Activated CD4-positive, alpha-beta T cell treated with anti-CD3 and anti-CD28 coated beads, Interleukin-2, amount 10 ng/mL, durations not matched to agents 24 days and 14 days (primary cell): ENCODE measurements at regions of chr13 and their contacts with region 1.

Region 1: DNA sequence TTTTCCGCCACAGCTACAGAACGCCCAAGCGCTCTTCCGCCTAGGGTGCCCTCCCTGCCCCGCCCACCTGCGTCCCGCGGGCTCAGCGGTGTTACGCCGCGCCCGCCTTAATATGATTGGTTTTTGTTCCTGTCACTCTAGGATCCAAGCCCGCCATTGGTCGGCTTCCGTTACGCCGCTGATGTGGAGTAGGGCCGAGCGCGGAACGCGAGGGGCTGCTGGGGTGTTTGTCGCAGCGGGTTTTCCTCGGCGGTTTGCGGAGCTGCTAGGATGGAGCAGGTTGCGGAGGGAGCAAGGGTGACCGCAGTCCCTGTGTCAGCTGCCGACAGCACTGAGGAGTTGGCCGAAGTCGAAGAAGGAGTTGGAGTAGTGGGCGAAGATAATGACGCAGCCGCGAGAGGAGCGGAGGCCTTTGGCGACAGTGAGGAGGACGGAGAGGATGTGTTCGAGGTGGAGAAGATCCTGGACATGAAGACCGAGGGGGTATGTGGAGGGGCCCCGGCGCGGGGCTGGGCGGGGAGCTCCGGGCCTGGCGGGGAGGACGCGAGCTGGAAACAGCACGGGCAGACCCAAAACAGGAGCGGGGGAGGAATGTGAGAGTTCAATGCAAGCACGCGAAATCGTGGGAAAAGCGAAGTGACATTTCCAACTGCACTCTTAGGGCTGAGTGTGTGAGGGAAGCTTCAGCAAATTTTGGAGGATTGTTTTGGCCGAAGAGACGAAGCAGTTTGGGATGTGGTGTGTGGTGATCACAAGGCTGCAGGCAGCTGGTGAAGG is at the start of gene MPHOSPH8:
- DNase-seq: peak; percentile 98
- H3K4me3 Mint-ChIP-seq: peak within 1 kb of the TSS; percentile 100
- H3K27ac Mint-ChIP-seq: peak within 1 kb of the TSS; percentile 97
- H3K4me1 Mint-ChIP-seq: peaks cover 26% of the 10 kb centered on the region
- H3K27me3 Mint-ChIP-seq: peaks cover 4% of the 10 kb centered on the region
- total RNA-seq, gene MPHOSPH8: 40.3 and 41.1 TPM in 2 replicates

Region 2: GRCh38 chr13:19587635-19588300 is 45.9 kb before region 1 on chr13:
- intact Hi-C with region 1: loop called (anchors 5 kb)
- DNase-seq: peak; percentile 82
- H3K4me3 Mint-ChIP-seq: peak overlapping the region; percentile 73
- H3K27ac Mint-ChIP-seq: peak overlapping the region; percentile 82
- H3K4me1 Mint-ChIP-seq: peaks cover 15% of the 10 kb centered on the region
- H3K27me3 Mint-ChIP-seq: peaks cover 8% of the 10 kb centered on the region

Region 3: DNA sequence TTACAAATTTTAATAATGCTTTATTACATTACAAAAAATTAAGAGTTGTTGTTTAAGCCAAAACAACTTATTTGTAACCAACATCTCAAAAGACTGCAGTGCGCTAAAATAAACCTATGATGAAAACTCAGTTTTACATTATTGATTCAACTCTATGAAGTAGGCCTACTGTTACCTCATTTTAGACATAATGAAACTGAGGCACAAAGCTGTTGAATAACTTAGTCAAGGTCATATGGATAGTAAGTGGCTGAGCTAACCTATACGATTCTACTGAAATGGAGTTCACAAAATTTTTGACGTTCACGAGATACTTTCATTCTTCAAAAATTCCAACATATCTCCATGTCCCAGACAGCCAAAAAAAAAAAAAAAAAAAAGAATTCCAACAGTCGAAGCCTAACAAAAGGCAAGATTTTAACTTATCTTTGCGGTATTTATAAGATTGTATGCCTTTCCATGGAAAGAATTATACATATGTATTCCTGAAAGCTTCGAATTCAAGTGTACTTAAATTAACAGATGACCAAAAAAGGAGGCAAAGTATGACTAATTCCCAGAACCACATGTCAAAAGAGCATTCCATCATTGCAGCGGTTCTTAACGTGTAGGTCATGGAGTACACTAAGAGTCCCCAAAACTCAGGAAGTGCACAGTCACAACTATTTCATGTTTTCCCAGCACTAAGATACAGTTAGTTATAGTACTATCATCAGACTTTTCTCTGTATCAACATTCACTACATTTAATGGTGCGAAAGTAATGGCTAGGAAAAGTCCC is 79.7 kb after region 1 on chr13:
- intact Hi-C with region 1: loop called (anchors 2 kb)
- DNase-seq: no peak
- H3K4me3 Mint-ChIP-seq: no peak overlapping the region
- H3K27ac Mint-ChIP-seq: peak overlapping the region; percentile 64
- H3K4me1 Mint-ChIP-seq: peaks cover 7% of the 10 kb centered on the region
- H3K27me3 Mint-ChIP-seq: no peaks in the 10 kb centered on the region

Region 4: GRCh38 chr13:19782049-19782726 is 148.5 kb after region 1 on chr13:
- intact Hi-C with region 1: loop called (anchors 2 kb)
- DNase-seq: peak; percentile 91
- H3K4me3 Mint-ChIP-seq: peak overlapping the region; percentile 96
- H3K27ac Mint-ChIP-seq: peak overlapping the region; percentile 99
- H3K4me1 Mint-ChIP-seq: peaks cover 6% of the 10 kb centered on the region
- H3K27me3 Mint-ChIP-seq: peaks cover 2% of the 10 kb centered on the region